Posterior vena cava (tissue), 2 donors: ENCODE measurements at regions of chr2 and their contacts with region 1.

Region 1: DNA sequence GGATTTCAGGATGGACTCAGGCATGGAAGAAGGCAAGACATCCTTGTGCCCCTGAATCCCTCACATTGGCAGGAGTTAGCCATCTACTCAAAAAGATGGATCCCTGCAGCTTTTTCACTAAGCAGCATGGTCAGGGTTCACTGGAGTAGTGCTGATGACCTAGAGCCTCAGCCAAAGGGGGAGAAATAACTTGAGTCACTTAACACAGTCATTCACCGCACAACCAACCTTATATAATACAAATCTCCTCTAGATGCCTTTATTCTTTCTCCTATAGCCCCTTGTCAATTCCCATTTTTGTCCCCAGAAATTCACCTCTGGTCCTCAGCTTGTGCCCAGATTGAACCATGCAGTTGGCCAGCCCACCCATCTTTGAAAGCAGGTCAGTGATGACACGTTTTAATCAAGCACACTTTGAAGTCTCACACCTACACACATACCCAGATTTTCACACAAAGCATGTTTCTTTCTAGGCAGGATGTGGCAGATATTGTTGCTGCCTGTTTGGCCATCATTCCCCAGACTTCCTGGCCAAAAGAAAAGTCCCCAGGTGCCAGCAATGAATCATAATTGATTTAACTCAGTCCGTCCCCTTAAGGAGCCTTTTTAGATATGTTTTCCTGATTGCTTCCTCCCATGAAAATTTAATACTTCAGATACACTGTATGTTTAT is 84.2 kb downstream of the LBH start:
- DNase-seq: no peak

Region 2: DNA sequence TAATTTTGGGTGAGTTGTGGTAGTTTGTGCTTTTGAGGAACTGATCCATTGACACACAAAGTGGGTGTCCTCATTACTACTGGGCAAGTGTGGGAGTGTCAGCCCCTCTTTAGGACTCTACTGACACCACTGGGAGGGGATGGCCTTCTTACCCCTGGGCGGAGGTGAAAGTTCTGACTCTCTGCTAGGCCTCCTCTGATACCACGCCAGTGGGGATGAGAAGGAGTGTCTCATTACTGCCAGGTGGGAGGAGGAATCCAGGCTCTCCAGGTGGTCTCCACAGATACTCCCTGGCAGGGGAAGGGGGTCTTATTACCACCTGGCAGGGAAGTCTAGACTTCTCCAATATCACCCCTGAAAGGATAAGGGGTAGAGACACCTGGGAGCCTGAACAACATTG is 140.6 kb after region 1 on chr2:
- intact Hi-C with region 1: loop called in 1 of 2 experiments (anchors 1 kb)
- DNase-seq: no peak